Posterior vena cava (tissue), 2 donors: ENCODE measurements at regions of chr19 and their contacts with region 1.

Region 1: DNA sequence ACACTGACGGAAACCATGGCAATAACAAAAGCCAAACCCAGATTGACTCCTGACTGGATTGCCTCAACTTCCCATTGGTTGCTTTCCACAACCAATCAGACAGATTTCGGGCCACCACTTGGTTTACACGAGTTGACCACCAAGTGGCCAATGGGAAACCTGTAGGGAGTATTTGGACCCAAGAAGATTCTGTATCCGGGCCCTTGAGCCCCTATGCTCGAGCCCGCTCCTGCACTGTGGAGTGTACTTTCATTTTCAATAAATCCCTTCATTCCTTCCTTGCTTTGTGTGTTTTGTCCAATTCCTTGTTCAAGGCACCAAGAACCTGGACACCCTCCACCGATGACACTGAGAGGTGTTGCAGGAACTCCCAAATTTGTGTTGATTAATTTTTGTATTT is 24.1 kb upstream of the URI1 start:
- DNase-seq: no peak

Region 2: DNA sequence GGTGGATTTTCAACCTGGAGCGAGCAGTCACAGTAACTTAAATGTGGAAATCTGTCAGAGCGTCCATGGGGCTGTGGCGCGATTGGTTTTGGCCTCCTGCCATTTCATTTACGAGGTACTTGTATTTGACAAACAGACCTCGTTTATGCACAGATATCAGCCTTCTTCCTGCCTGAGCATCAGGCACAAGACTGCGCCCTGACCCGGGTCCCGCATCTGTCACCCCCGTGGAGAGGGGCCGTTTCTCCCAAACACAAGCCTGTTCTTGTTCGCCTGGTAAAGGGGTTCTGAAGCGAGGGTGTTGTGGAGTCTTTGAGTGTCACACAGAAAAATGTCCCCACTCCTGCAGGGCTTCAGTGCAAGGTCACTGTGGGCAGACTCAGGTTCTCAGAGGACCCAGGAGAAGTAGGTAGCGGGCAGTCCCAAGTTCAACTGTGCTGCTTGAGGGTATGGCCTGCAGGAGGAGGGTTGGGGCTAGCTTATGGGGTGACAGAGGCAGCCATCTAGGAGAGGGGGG is 226.4 kb after region 1 on chr19:
- intact Hi-C with region 1: loop called in 1 of 2 experiments (anchors 2 kb)
- DNase-seq: no peak